ENCODE measurements at regions of chr7 and their contacts with region 1.

Region 1: GRCh38 chr7:101743241-101743994 is 74.0 kb upstream of the CUX1 start:
- DNase-seq: peak; percentile 76
- ATAC-seq: peak; percentile 70

Region 2: GRCh38 chr7:102236592-102237287 is 493.3 kb after region 1 on chr7:
- intact Hi-C with region 1: loop called (anchors 10 kb)
- DNase-seq: peak; percentile 79
- ATAC-seq: peak; percentile 90

Measured in sciatic nerve (tissue), 2 donors.